B cell (primary cell): ENCODE measurements at regions of chr14 and their contacts with region 1.

Region 1: DNA sequence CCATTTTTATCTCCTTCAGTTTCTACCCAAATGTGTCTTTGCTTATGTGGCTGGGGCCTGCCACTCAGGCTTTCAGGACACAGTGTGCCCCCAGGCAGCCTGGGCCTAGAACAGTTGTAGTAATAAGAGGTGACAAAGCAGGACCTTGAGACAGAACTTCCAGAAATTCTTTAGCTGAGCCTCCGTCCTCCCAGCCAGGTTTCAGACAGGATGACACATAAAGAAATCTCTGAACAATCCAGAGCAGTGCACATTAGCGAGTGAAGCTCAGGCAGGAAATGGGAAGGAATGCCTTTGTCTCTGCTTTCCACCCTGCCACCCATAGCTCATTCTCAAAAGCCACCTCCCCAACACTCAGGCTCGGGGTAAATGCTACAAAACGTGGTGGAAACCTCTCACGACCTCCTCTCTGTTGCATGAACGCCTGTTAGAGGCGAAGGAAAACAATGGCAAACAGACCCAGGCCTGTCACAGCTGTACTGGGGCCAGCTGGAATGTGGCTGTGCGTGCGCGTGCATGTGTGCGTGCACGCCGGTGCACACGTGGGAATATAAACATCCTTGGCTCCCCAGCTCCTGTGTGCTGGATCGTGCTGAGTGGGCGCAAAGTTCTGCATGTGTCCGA is 286.7 kb downstream of the ZFP36L1 start:
- DNase-seq: no peak
- ATAC-seq: no peak
- H3K4me3 ChIP-seq: no peak overlapping the region
- H3K4me3 Mint-ChIP-seq: peak overlapping the region; percentile 40
- H3K27ac ChIP-seq: peak overlapping the region; percentile 79 to 88
- H3K27ac Mint-ChIP-seq: peak overlapping the region; percentile 89
- H3K4me1 ChIP-seq: peaks cover 73 to 86% of the 10 kb centered on the region in 2 donors
- H3K4me1 Mint-ChIP-seq: peaks cover 83% of the 10 kb centered on the region
- H3K27me3 ChIP-seq: no peaks in the 10 kb centered on the region
- H3K27me3 Mint-ChIP-seq: no peaks in the 10 kb centered on the region
- CTCF ChIP-seq: no peak

Region 2: DNA sequence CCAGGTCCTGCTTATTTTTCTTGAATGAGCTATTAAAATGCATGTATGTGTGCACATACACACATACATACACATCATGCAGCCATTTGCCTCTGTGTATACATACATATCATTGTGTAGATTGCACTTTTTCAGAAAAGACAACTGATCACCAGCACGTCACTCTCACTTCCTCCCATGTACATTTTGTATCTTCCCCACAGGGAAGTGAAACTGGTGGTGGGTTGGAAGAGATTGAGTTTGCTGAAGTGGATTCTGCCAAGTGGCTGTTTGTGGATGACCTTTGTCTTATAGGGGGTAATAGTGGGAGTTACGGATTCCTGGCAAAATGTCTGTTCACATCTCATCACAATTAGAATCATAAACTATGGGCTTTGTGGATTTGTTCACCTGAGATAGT is 237.9 kb before region 1 on chr14:
- CTCF ChIA-PET with region 1: interaction called, 3 read pairs
- POLR2A ChIA-PET with region 1: interaction called, 12 read pairs
- intact Hi-C with region 1: no loop called
- DNase-seq: peak; percentile 92
- ATAC-seq: peak; percentile 71
- H3K4me3 ChIP-seq: peak overlapping the region in 1 of 5 experiments; percentile 14
- H3K4me3 Mint-ChIP-seq: peak overlapping the region; percentile 72
- H3K27ac ChIP-seq: peak overlapping the region; percentile 78 to 94
- H3K27ac Mint-ChIP-seq: peak overlapping the region; percentile 95
- H3K4me1 ChIP-seq: peaks cover 78 to 89% of the 10 kb centered on the region in 2 donors
- H3K4me1 Mint-ChIP-seq: peaks cover 80% of the 10 kb centered on the region
- H3K27me3 ChIP-seq: no peaks in the 10 kb centered on the region
- H3K27me3 Mint-ChIP-seq: no peaks in the 10 kb centered on the region
- CTCF ChIP-seq: no peak

Region 3: DNA sequence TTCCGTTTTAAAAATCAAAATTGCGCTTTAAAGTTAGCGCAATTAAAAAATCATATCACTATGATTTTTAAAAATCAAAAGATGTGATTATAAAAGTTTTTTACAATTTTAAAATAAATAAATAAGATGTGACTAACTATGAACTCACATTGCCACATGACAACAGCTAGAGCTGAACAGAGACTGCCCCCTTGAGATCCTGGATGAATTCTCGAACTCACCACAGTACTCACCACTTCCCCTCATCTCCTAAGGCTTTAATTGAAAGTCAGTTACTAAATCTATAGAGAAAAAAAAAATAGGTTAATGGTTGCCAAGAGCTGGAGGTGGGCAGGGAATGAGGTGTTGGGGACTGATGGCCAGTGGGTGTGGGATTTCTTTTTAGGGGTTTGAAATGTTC is 97.5 kb before region 1 on chr14:
- CTCF ChIA-PET with region 1: interaction called, 4 read pairs
- POLR2A ChIA-PET with region 1: no interaction called
- intact Hi-C with region 1: loop called (anchors 10 kb)
- DNase-seq: peak; percentile 62
- ATAC-seq: peak; percentile 46
- H3K4me3 ChIP-seq: no peak overlapping the region
- H3K4me3 Mint-ChIP-seq: no peak overlapping the region
- H3K27ac ChIP-seq: peak overlapping the region; percentile 30 to 60
- H3K27ac Mint-ChIP-seq: peak overlapping the region; percentile 84
- H3K4me1 ChIP-seq: peaks cover 57 to 60% of the 10 kb centered on the region in 2 donors
- H3K4me1 Mint-ChIP-seq: peaks cover 61% of the 10 kb centered on the region
- H3K27me3 ChIP-seq: no peaks in the 10 kb centered on the region
- H3K27me3 Mint-ChIP-seq: no peaks in the 10 kb centered on the region
- CTCF ChIP-seq: peak; percentile 24

Region 4: GRCh38 chr14:68476212-68476907 is 29.8 kb before region 1 on chr14:
- CTCF ChIA-PET with region 1: interaction called, 6 read pairs
- POLR2A ChIA-PET with region 1: interaction called, 4 read pairs
- intact Hi-C with region 1: loop called (anchors 2 kb)
- DNase-seq: peak; percentile 89
- ATAC-seq: peak; percentile 90
- H3K4me3 ChIP-seq: peak overlapping the region in 1 of 5 experiments; percentile 21
- H3K4me3 Mint-ChIP-seq: peak overlapping the region; percentile 72
- H3K27ac ChIP-seq: peak overlapping the region; percentile 95 to 99
- H3K27ac Mint-ChIP-seq: peak overlapping the region; percentile 98
- H3K4me1 ChIP-seq: peaks cover 73 to 77% of the 10 kb centered on the region in 2 donors
- H3K4me1 Mint-ChIP-seq: peaks cover 84% of the 10 kb centered on the region
- H3K27me3 ChIP-seq: no peaks in the 10 kb centered on the region
- H3K27me3 Mint-ChIP-seq: no peaks in the 10 kb centered on the region
- CTCF ChIP-seq: no peak

Region 5: DNA sequence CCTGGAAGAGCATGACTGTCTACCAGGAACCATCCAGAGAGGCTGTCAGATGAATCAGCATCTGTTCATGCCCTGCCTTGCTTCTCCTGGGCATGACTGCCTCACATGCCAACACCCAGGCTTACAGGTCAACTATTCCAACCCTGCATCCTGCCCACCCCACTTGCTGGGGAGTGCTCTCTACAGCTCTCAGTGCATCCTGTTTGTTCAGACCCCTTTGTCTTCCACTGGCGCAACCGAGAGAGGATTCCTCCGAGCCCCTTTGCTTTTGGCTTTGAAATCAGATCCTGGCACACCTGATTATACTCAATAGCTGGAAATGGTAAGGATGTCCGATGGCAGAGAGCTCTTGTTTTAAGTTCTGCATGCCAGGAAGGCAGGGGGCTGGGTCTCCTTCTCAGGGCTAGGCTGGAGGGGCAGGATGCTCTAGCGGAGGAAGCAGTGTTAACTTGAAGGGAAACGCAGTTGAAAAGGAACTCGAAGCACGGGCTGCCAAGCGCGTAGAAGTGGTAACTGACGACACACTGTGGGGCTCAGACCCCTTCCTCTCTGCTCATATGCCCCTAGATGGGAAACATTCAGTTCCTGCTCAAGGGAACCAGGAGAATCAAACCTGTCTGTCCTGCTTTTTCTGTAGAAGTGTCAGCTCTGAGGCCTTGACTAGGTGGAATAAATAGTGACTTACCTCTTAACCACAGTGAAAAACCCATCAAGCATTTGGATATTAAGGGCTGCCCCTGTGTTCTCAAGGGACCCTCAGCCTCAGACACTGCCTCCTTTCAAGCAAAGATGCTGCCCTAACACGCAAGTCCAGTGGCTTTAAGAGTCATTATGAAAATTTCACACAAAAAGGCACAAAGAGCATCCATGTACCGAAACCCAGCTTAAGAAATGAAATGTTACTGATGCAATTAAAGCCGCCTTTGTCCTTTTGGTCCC is 10.8 kb before region 1 on chr14:
- CTCF ChIA-PET with region 1: interaction called, 6 read pairs
- POLR2A ChIA-PET with region 1: interaction called, 5 read pairs
- intact Hi-C with region 1: loop called (anchors 1 kb)
- DNase-seq: peak; percentile 58
- ATAC-seq: peak; percentile 83
- H3K4me3 ChIP-seq: peak overlapping the region in 1 of 5 experiments; percentile 13
- H3K4me3 Mint-ChIP-seq: peak overlapping the region; percentile 56
- H3K27ac ChIP-seq: peak overlapping the region; percentile 11 to 61
- H3K27ac Mint-ChIP-seq: peak overlapping the region; percentile 82
- H3K4me1 ChIP-seq: peaks cover 35 to 54% of the 10 kb centered on the region in 2 donors
- H3K4me1 Mint-ChIP-seq: peaks cover 63% of the 10 kb centered on the region
- H3K27me3 ChIP-seq: no peaks in the 10 kb centered on the region
- H3K27me3 Mint-ChIP-seq: no peaks in the 10 kb centered on the region
- CTCF ChIP-seq: no peak

Region 6: GRCh38 chr14:68520637-68521556 is 14.8 kb after region 1 on chr14:
- CTCF ChIA-PET with region 1: interaction called, 9 read pairs
- POLR2A ChIA-PET with region 1: interaction called, 10 read pairs
- intact Hi-C with region 1: no loop called
- DNase-seq: no peak
- ATAC-seq: no peak
- H3K4me3 ChIP-seq: no peak overlapping the region
- H3K4me3 Mint-ChIP-seq: no peak overlapping the region
- H3K27ac ChIP-seq: no peak overlapping the region
- H3K27ac Mint-ChIP-seq: peak overlapping the region; percentile 59
- H3K4me1 ChIP-seq: peaks cover 38 to 47% of the 10 kb centered on the region in 2 donors
- H3K4me1 Mint-ChIP-seq: peaks cover 54% of the 10 kb centered on the region
- H3K27me3 ChIP-seq: no peaks in the 10 kb centered on the region
- H3K27me3 Mint-ChIP-seq: no peaks in the 10 kb centered on the region
- CTCF ChIP-seq: no peak

Region 7: GRCh38 chr14:68535404-68536017 is 29.4 kb after region 1 on chr14:
- CTCF ChIA-PET with region 1: interaction called, 3 read pairs
- POLR2A ChIA-PET with region 1: interaction called, 12 read pairs
- intact Hi-C with region 1: no loop called
- DNase-seq: no peak
- ATAC-seq: no peak
- H3K4me3 ChIP-seq: no peak overlapping the region
- H3K4me3 Mint-ChIP-seq: no peak overlapping the region
- H3K27ac ChIP-seq: no peak overlapping the region
- H3K27ac Mint-ChIP-seq: peak overlapping the region; percentile 18
- H3K4me1 ChIP-seq: no peaks in the 10 kb centered on the region
- H3K4me1 Mint-ChIP-seq: peaks cover 3% of the 10 kb centered on the region
- H3K27me3 ChIP-seq: no peaks in the 10 kb centered on the region
- H3K27me3 Mint-ChIP-seq: no peaks in the 10 kb centered on the region
- CTCF ChIP-seq: no peak

Region 8: DNA sequence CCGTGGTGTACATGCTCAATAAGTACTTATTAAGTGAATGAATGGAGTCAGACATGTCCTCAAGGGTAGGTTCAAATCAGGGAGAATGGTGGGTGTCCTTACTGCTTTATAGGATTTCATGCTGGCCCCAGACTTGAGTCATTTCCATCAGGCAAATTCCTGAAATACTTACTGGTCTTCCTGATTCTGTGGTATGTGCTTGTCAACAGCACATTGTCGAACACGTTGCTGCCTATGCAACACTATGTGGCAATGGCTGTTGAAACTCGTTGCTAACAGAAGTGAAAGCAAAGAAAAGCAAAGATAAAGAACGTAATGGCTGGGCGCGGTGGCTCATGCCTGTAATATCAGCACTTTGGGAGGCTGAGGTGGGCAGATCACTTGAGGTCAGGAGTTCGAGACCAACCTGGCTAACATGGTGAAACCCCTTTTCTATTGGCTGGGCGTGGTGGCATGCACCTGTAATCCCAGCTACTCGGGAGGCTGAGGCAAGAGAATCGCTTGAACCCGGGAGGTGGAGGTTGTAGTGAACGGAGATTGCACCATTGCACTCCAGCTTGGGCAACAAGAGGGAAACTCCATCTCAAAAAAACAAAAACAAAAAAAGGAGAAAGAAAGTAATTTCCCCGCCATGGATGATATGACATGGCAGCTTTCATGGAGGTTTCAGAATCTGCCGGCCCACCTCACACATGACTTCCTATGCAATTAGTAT is 71.9 kb after region 1 on chr14:
- CTCF ChIA-PET with region 1: no interaction called
- POLR2A ChIA-PET with region 1: no interaction called
- intact Hi-C with region 1: no loop called
- DNase-seq: no peak
- ATAC-seq: no peak
- H3K4me3 ChIP-seq: no peak overlapping the region
- H3K4me3 Mint-ChIP-seq: no peak overlapping the region
- H3K27ac ChIP-seq: no peak overlapping the region
- H3K27ac Mint-ChIP-seq: no peak overlapping the region
- H3K4me1 ChIP-seq: no peaks in the 10 kb centered on the region
- H3K4me1 Mint-ChIP-seq: peaks cover 1% of the 10 kb centered on the region
- H3K27me3 ChIP-seq: no peaks in the 10 kb centered on the region
- H3K27me3 Mint-ChIP-seq: no peaks in the 10 kb centered on the region
- CTCF ChIP-seq: no peak